Activated CD8-positive, alpha-beta T cell treated with anti-CD3 and anti-CD28 coated beads for 36 hours (primary cell): ENCODE measurements at regions of chr4 and their contacts with region 1.

Region 1: GRCh38 chr4:152640058-152640833 is 39.6 kb downstream of the TMEM154 start:
- DNase-seq: no peak
- ATAC-seq: no peak
- H3K4me3 Mint-ChIP-seq: no peak overlapping the region
- H3K27ac Mint-ChIP-seq: no peak overlapping the region
- H3K4me1 Mint-ChIP-seq: peaks cover 34% of the 10 kb centered on the region
- H3K27me3 Mint-ChIP-seq: no peaks in the 10 kb centered on the region
- CTCF ChIP-seq: peak; percentile 94

Region 2: GRCh38 chr4:152448854-152449253 is 191.4 kb before region 1 on chr4:
- CTCF ChIA-PET with region 1: interaction called, 17 read pairs
- POLR2A ChIA-PET with region 1: no interaction called
- intact Hi-C with region 1: no loop called
- DNase-seq: no peak
- ATAC-seq: no peak
- H3K4me3 Mint-ChIP-seq: no peak overlapping the region
- H3K27ac Mint-ChIP-seq: no peak overlapping the region
- H3K4me1 Mint-ChIP-seq: peaks cover 21% of the 10 kb centered on the region
- H3K27me3 Mint-ChIP-seq: no peaks in the 10 kb centered on the region
- CTCF ChIP-seq: no peak

Region 3: GRCh38 chr4:152515678-152516077 is 124.6 kb before region 1 on chr4:
- CTCF ChIA-PET with region 1: interaction called, 10 read pairs
- POLR2A ChIA-PET with region 1: no interaction called
- intact Hi-C with region 1: no loop called
- DNase-seq: no peak
- ATAC-seq: no peak
- H3K4me3 Mint-ChIP-seq: no peak overlapping the region
- H3K27ac Mint-ChIP-seq: no peak overlapping the region
- H3K4me1 Mint-ChIP-seq: peaks cover 37% of the 10 kb centered on the region
- H3K27me3 Mint-ChIP-seq: no peaks in the 10 kb centered on the region
- CTCF ChIP-seq: no peak